Activated CD4-positive, alpha-beta memory T cell treated with anti-CD3 and anti-CD28 coated beads for 36 hours (primary cell): ENCODE measurements at regions of chr1 and their contacts with region 1.

Region 1: DNA sequence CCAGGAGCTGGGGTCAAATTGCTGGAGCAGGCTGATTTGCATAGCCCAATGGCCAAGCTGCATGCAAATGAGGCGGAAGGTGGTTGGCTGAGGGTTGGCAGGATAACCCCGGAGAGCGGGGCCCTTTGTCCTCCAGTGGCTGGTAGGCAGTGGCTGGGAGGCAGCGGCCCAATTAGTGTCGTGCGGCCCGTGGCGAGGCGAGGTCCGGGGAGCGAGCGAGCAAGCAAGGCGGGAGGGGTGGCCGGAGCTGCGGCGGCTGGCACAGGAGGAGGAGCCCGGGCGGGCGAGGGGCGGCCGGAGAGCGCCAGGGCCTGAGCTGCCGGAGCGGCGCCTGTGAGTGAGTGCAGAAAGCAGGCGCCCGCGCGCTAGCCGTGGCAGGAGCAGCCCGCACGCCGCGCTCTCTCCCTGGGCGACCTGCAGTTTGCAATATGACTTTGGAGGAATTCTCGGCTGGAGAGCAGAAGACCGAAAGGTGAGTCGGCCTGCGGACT is at the start of gene GADD45A:
- DNase-seq: peak; percentile 98
- H3K4me3 Mint-ChIP-seq: peak within 1 kb of the TSS; percentile 92
- H3K27ac Mint-ChIP-seq: peak within 1 kb of the TSS; percentile 96
- H3K4me1 Mint-ChIP-seq: peaks cover 47% of the 10 kb centered on the region
- H3K27me3 Mint-ChIP-seq: no peaks in the 10 kb centered on the region
- total RNA-seq, gene GADD45A: 36.2 to 39.1 TPM

Region 2: DNA sequence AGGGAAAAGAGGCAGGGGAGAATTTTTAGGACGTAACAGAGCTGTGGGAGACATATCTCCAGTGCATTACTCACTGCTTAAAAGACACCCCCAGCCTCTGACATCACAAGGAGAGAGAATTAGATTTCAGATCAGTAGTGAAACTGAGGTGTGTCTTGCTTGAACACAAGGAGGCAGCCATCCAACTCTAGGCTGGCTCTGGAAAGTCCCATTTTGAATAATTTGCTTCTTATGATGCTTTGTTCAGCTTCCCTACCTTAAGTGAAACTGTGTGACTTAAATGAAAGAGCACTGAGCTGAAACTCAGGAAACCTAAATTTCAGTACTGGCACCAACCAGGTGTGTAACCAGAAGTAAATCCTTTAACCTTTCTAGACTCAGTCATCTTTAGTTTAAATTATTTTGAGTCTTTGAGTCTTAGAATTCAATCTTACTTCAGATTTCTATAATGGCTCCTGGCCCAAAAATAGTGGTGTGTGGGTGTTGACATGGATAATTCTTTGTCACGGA is 1402.7 kb before region 1 on chr1:
- CTCF ChIA-PET with region 1: no interaction called
- POLR2A ChIA-PET with region 1: no interaction called
- intact Hi-C with region 1: loop called (anchors 10 kb)
- DNase-seq: peak; percentile 80
- H3K4me3 Mint-ChIP-seq: no peak overlapping the region
- H3K27ac Mint-ChIP-seq: peak overlapping the region; percentile 76
- H3K4me1 Mint-ChIP-seq: peaks cover 87% of the 10 kb centered on the region
- H3K27me3 Mint-ChIP-seq: no peaks in the 10 kb centered on the region

Region 3: DNA sequence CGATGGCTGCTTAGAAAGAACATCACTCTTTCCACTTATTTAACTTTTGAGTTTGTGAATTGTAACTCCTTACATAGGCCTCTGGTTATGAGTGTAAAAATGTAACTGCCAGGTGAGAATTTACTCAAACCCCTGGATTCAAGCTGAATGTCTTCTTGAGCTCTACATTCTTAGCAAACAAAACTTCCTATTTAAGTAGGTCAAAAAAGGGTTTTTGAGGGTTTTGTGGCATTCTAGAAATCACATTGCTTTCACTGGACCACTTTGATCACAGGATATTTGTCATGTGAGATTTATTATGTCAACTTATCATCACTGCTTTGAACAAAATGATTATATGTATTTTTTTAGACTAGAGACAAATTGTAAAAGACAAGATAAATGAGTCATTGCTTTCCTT is 513.1 kb before region 1 on chr1:
- CTCF ChIA-PET with region 1: no interaction called
- POLR2A ChIA-PET with region 1: interaction called, 3 read pairs
- intact Hi-C with region 1: loop called (anchors 2 kb)
- DNase-seq: no peak
- H3K4me3 Mint-ChIP-seq: peak overlapping the region; percentile 74
- H3K27ac Mint-ChIP-seq: peak overlapping the region; percentile 99
- H3K4me1 Mint-ChIP-seq: peaks cover 72% of the 10 kb centered on the region
- H3K27me3 Mint-ChIP-seq: peaks cover 5% of the 10 kb centered on the region

Region 4: DNA sequence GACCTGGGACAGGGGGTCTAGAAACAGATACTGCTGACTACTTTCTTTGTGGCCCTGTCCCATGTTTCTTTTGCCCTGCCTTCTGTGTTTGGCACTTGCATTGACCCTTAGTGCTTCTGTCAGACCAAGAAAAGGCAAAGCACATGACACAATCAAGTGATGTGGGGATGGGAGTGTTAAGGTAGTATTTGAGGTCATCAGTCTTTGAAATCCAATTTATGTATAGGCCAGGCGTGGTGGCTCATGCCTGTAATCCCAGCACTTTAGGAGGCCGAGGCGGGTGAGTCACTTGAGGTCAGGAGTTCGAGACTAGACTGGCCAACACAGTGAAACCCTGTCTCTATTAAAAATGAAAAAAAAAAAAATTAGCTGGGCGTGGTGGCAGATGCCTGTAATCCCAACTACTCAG is 280.9 kb before region 1 on chr1:
- CTCF ChIA-PET with region 1: no interaction called
- POLR2A ChIA-PET with region 1: no interaction called
- intact Hi-C with region 1: loop called (anchors 1 kb)
- DNase-seq: no peak
- H3K4me3 Mint-ChIP-seq: no peak overlapping the region
- H3K27ac Mint-ChIP-seq: no peak overlapping the region
- H3K4me1 Mint-ChIP-seq: peaks cover 14% of the 10 kb centered on the region
- H3K27me3 Mint-ChIP-seq: no peaks in the 10 kb centered on the region

Region 5: DNA sequence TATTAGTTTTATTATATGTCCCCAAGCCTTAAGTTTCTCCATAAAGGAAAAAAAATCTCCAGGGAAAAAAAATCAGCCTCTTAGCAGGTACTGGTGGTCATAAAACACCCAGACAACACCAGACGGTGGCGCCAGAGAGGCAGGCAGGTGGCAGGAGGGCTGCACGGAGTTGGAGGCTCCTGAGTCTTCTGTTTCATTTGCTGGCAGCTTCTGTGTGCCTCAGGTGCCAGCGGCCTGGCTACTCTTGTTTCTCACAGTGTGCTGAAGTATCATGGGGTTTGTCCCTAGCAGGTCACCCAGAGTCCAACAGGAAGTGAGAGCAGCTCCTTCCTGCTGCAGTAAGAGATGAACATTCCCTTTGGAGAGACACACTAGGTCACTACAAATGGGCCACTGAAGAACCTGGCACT is 123.4 kb before region 1 on chr1:
- CTCF ChIA-PET with region 1: interaction called, 22 read pairs
- POLR2A ChIA-PET with region 1: no interaction called
- intact Hi-C with region 1: loop called (anchors 2 kb)
- DNase-seq: peak; percentile 90
- H3K4me3 Mint-ChIP-seq: no peak overlapping the region
- H3K27ac Mint-ChIP-seq: no peak overlapping the region
- H3K4me1 Mint-ChIP-seq: peaks cover 6% of the 10 kb centered on the region
- H3K27me3 Mint-ChIP-seq: peaks cover 3% of the 10 kb centered on the region

Region 6: DNA sequence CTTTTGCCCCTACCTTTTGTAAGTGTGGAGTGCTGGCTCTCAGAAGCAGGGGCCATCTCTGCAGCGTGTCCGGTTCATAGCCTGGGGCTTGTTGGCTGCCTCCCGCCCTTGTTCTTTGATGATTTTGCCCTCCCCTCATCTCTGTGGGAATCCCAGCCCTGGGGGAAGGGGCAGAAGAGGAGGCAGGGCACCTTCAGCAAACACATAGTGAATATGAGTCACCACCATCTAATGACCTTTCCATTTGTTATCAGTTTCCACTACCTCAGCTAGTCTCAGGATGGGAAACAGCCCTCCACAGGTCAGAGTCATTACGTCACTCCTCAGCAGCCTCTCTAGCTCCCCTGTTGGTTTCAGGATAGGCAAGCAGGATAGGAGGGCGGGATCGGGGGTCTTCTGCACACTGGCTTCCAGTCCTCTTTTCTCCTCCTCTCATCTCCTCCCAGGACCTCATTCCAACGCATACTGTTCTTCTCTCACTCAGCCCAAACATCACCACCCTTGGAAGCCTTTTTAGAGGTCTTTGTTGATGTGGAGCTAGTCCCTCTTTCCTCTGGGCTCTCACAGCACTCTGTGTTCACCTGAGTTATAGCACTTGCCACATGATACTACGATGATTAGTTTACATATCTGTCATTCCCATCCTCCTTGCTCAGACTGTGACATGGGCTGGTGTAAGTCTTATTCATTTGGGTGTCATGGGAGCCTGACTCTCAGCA is 15.7 kb after region 1 on chr1:
- CTCF ChIA-PET with region 1: interaction called, 6 read pairs
- POLR2A ChIA-PET with region 1: interaction called, 16 read pairs
- intact Hi-C with region 1: loop called (anchors 2 kb)
- DNase-seq: peak; percentile 40
- H3K4me3 Mint-ChIP-seq: no peak overlapping the region
- H3K27ac Mint-ChIP-seq: peak overlapping the region; percentile 15
- H3K4me1 Mint-ChIP-seq: peaks cover 13% of the 10 kb centered on the region
- H3K27me3 Mint-ChIP-seq: no peaks in the 10 kb centered on the region

Region 7: GRCh38 chr1:67760030-67760821 is 75.1 kb after region 1 on chr1:
- CTCF ChIA-PET with region 1: interaction called, 41 read pairs
- POLR2A ChIA-PET with region 1: no interaction called
- intact Hi-C with region 1: loop called (anchors 2 kb)
- DNase-seq: peak; percentile 65
- H3K4me3 Mint-ChIP-seq: no peak overlapping the region
- H3K27ac Mint-ChIP-seq: no peak overlapping the region
- H3K4me1 Mint-ChIP-seq: no peaks in the 10 kb centered on the region
- H3K27me3 Mint-ChIP-seq: peaks cover 17% of the 10 kb centered on the region

Region 8: DNA sequence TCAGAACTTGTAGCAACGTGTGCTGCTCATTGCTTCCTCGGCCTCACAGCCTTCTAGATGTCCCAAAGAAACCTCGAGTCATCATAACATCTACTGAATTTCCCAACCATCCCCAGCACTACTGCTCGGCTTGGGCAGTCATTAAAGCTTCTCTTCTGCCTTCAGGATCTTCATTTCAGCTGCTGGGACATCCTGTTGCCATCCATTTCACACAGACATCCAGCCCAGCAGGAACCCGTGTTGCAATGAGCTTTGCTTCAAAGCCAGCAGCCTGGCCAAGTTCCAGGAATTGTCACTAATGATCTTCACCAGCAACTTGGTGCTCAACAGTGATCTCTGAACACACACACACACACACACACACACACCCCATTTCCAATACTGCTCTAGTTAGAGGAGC is 528.7 kb after region 1 on chr1:
- CTCF ChIA-PET with region 1: no interaction called
- POLR2A ChIA-PET with region 1: no interaction called
- intact Hi-C with region 1: no loop called
- DNase-seq: no peak
- H3K4me3 Mint-ChIP-seq: no peak overlapping the region
- H3K27ac Mint-ChIP-seq: no peak overlapping the region
- H3K4me1 Mint-ChIP-seq: no peaks in the 10 kb centered on the region
- H3K27me3 Mint-ChIP-seq: no peaks in the 10 kb centered on the region